ENCODE measurements at regions of chr2 and their contacts with region 1.

Region 1: GRCh38 chr2:171160119-171160955 is at the start of gene TLK1:
- DNase-seq: peak; percentile 17 to 85
- H3K4me3 ChIP-seq: peak within 1 kb of the TSS; percentile 96 to 97
- H3K27ac ChIP-seq: peak within 1 kb of the TSS; percentile 98 to 99
- H3K4me1 ChIP-seq: peaks cover 0 to 7% of the 10 kb centered on the region in 2 donors
- H3K27me3 ChIP-seq: no peaks in the 10 kb centered on the region
- CTCF ChIP-seq: no peak
- total RNA-seq, gene TLK1: 32.2 TPM

Region 2: DNA sequence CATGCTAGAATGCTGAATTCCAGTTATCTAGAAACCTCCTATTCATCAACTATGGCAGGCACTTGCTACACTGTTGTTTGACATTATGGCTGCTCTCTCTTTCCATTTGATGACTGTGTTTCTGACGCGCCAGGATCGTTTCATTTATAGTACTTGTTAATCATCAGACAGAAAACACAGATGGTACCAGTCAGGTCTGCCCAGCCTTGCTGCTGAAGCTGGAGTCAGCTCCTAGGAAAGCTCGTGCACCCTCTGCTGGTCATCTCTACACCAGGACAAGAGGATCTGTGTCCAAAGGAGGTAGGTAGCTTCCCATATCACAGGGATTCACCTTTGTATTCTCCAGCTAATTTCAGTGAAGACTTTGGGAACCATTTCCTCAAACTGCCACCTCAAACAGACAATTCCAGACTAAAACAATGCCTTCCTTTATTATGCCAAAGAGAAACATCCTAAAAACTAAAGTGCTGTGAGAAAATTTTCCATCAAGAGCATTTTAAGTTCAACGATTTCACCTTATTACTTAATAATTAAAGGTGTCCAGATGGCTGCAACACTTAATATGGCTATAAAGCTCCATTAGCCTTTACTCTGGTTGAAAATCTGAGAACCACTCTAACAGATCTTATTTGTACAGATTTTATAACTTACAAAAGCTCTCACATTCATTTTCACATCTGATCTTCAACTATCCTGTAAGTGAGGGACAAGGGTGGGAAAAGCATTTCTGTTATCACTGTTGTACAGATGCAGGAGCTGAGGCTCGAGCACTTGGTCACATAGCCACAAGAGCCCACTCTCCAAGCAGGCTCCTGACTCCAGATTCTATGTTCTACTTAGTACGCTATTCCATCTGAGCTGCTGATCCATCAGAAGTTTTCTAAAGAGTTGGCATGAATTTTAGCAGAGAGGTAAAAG is 255.9 kb after region 1 on chr2:
- intact Hi-C with region 1: loop called (anchors 5 kb)
- DNase-seq: peak; percentile 49 to 93
- H3K4me3 ChIP-seq: no peak overlapping the region
- H3K27ac ChIP-seq: peak overlapping the region in 1 of 2 donors; percentile 67
- H3K4me1 ChIP-seq: no peaks in the 10 kb centered on the region
- H3K27me3 ChIP-seq: no peaks in the 10 kb centered on the region
- CTCF ChIP-seq: peak; percentile 75 to 84 (median 76)

Measured in ascending aorta (tissue), 2 donors.